Breast epithelium (tissue), 4 donors: ENCODE measurements at regions of chr4 and their contacts with region 1.

Region 1: GRCh38 chr4:75989846-75990528 is 758 bp downstream of the SDAD1 start:
- DNase-seq: no peak
- H3K4me3 ChIP-seq: peak overlapping the region; percentile 72 to 90 (median 83)
- H3K27ac ChIP-seq: peak overlapping the region; percentile 45 to 73
- H3K4me1 ChIP-seq: peaks cover 0 to 12% of the 10 kb centered on the region in 2 donors
- H3K27me3 ChIP-seq: no peaks in the 10 kb centered on the region
- CTCF ChIP-seq: no peak
- POLR2A ChIP-seq: no peak

Region 2: GRCh38 chr4:76388160-76388908 is 398.3 kb after region 1 on chr4:
- intact Hi-C with region 1: loop called (anchors 5 kb)
- DNase-seq: no peak
- H3K4me3 ChIP-seq: no peak overlapping the region
- H3K27ac ChIP-seq: no peak overlapping the region
- H3K4me1 ChIP-seq: no peaks in the 10 kb centered on the region
- H3K27me3 ChIP-seq: no peaks in the 10 kb centered on the region
- CTCF ChIP-seq: no peak
- POLR2A ChIP-seq: no peak